ENCODE measurements at regions of chr7 and their contacts with region 1.

Region 1: DNA sequence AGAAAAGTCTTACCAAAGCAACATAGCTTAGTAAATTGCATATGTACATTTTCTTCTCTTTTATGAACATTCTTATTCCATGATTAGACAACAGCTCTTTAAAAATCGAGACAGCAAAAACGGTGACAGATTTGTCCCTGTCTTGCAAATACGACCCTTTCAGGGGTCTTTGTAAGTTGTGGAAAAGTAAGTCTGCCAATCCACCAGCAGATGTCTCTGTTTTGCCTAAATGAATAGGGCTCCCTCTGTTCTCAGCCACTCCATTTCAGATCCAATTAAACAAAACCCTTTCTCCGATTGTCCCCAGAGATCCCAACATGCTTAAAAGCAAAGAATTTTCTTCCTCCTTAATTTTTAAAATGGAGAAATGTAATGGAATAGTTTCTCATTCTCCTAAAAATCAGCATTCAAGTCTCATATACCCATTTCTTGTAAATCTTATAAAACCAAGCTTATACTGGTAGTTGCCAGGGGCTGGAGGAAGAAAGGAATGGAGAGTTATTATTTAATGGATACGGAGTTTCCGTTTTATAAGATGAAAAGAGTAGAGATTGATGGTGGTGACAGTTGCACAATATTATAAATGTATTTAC is 61.0 kb upstream of the NFE2L3 start:
- DNase-seq: peak in 7 of 9 donors; percentile 19 to 63 (median 53)
- ATAC-seq: peak; percentile 64
- H3K4me3 ChIP-seq: no peak overlapping the region
- H3K4me3 Mint-ChIP-seq: peak overlapping the region in 9 of 10 donors; percentile 4 to 50 (median 30)
- H3K27ac ChIP-seq: no peak overlapping the region
- H3K27ac Mint-ChIP-seq: peak overlapping the region in 6 of 9 donors; percentile 1 to 68 (median 2)
- H3K4me1 ChIP-seq: peaks cover 0 to 20% of the 10 kb centered on the region in 2 donors
- H3K4me1 Mint-ChIP-seq: peaks cover 11 to 54% (median 22%) of the 10 kb centered on the region in 7 donors
- H3K27me3 ChIP-seq: no peaks in the 10 kb centered on the region
- H3K27me3 Mint-ChIP-seq: no peaks in the 10 kb centered on the region

Region 2: DNA sequence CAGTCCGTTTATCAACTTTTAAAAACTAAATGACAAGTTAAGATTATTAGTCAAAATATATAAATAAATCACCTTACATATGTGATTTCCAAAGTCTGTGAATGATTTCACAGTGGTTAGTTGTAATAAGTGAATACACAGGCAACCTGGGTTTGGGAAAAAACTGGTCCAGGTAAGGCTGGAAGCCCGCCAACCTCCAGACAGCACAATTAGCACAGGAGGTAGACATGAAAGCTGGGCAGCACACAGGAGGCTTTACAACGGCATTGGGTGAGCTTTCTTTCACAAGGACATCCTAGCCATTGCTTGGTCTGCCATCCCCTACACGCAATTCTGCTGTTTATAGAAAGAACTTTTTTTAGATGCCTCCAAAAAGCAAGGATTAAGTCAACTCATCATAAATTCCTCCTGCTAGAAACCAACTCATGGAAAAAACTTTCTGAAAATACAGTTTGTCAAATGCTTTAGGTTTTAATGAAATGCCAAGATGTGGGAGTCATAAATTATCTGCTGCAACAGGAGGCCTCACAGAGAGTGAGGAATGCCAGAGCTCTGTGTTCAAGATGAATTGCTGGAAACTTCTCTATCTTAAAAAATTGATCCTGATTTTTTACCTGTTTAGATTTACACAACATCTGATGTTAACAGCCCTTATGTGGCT is 285.9 kb before region 1 on chr7:
- CTCF ChIA-PET with region 1: no interaction called
- POLR2A ChIA-PET with region 1: no interaction called
- intact Hi-C with region 1: no loop called
- DNase-seq: no peak
- ATAC-seq: no peak
- H3K4me3 ChIP-seq: no peak overlapping the region
- H3K4me3 Mint-ChIP-seq: no peak overlapping the region
- H3K27ac ChIP-seq: no peak overlapping the region
- H3K27ac Mint-ChIP-seq: no peak overlapping the region
- H3K4me1 ChIP-seq: no peaks in the 10 kb centered on the region
- H3K4me1 Mint-ChIP-seq: peaks cover 0 to 5% (median 0%) of the 10 kb centered on the region in 7 donors
- H3K27me3 ChIP-seq: no peaks in the 10 kb centered on the region
- H3K27me3 Mint-ChIP-seq: peaks cover 5 to 12% (median 9%) of the 10 kb centered on the region in 5 donors

Region 3: GRCh38 chr7:26078437-26079336 is 12.3 kb before region 1 on chr7:
- CTCF ChIA-PET with region 1: interaction called, 27 read pairs
- POLR2A ChIA-PET with region 1: interaction called, 4 read pairs
- intact Hi-C with region 1: loop called in 1 of 2 experiments (anchors 2 kb)
- DNase-seq: peak; percentile 68 to 86 (median 80)
- ATAC-seq: peak; percentile 99
- H3K4me3 ChIP-seq: no peak overlapping the region
- H3K4me3 Mint-ChIP-seq: peak overlapping the region in 7 of 10 donors; percentile 30 to 68 (median 51)
- H3K27ac ChIP-seq: no peak overlapping the region
- H3K27ac Mint-ChIP-seq: no peak overlapping the region
- H3K4me1 ChIP-seq: peaks cover 0 to 10% of the 10 kb centered on the region in 2 donors
- H3K4me1 Mint-ChIP-seq: peaks cover 0 to 10% (median 6%) of the 10 kb centered on the region in 7 donors
- H3K27me3 ChIP-seq: peaks cover 0 to 6% of the 10 kb centered on the region in 2 donors
- H3K27me3 Mint-ChIP-seq: peaks cover 15 to 84% (median 33%) of the 10 kb centered on the region in 5 donors

Region 4: DNA sequence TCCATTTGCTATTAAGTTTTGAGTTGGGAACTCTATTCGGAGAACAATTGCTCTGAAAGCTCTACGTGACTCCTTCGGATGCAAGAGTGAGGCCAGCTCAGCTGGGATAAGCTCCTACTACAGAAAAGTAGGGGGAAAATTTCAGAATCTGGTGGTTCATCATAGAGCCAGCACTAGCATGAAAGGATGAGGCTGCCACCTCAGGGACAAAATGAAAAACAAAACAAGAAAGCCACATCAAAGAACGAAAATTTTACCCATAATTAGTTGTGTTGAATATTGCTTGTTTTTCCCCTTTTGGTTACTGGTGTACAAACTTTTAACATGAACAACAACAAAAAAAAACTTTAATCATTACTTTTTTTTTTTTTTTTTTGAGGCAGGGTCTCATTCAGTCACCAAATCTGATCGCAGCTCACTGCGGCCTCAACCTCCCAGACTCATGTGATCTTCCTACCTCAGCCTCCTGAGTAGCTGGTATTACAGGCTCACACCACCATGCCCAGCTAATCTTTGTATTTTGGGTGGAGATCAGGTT is 21.2 kb after region 1 on chr7:
- CTCF ChIA-PET with region 1: interaction called, 58 read pairs
- POLR2A ChIA-PET with region 1: interaction called, 8 read pairs
- intact Hi-C with region 1: loop called in 1 of 2 experiments (anchors 1 kb)
- DNase-seq: peak in 4 of 9 donors; percentile 19 to 39 (median 28)
- ATAC-seq: no peak
- H3K4me3 ChIP-seq: no peak overlapping the region
- H3K4me3 Mint-ChIP-seq: peak overlapping the region in 1 of 10 donors; percentile 14
- H3K27ac ChIP-seq: no peak overlapping the region
- H3K27ac Mint-ChIP-seq: no peak overlapping the region
- H3K4me1 ChIP-seq: no peaks in the 10 kb centered on the region
- H3K4me1 Mint-ChIP-seq: peaks cover 2 to 19% (median 13%) of the 10 kb centered on the region in 7 donors
- H3K27me3 ChIP-seq: no peaks in the 10 kb centered on the region
- H3K27me3 Mint-ChIP-seq: peaks cover 0 to 9% (median 4%) of the 10 kb centered on the region in 5 donors

Region 5: DNA sequence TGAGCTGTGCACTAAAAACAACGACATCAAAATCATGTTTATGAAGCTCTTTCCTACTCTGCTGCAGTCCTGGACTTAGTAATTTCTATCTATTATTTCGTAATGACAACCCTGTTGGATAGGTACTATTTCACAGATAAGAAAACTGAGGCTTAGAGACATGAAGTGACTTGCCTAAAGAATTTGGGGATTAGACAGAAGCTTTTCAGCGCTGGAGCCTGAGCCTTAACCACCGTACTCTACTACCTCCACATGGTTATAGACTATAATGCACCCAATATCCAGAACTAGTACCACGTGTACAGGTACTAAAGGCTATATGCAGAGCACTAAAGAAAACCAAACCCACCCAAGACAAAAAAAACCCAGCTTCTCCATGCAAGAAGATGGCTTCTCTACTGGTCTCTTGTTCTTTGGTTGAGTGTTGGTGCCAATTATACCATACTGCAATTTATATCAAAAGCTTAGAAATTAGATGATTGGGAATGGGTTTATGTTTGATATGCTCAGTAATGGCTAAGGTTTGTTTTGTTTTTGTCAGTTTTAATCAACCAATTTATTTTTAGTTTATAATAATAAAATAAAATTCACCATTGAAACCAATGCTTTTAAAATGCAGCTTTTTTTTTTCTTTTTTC is 194.1 kb after region 1 on chr7:
- CTCF ChIA-PET with region 1: interaction called, 15 read pairs
- POLR2A ChIA-PET with region 1: no interaction called
- intact Hi-C with region 1: loop called (anchors 1 to 2 kb)
- DNase-seq: peak in 6 of 9 donors; percentile 20 to 49 (median 30)
- ATAC-seq: peak; percentile 82
- H3K4me3 ChIP-seq: no peak overlapping the region
- H3K4me3 Mint-ChIP-seq: no peak overlapping the region
- H3K27ac ChIP-seq: no peak overlapping the region
- H3K27ac Mint-ChIP-seq: no peak overlapping the region
- H3K4me1 ChIP-seq: no peaks in the 10 kb centered on the region
- H3K4me1 Mint-ChIP-seq: peaks cover 0 to 6% (median 4%) of the 10 kb centered on the region in 7 donors
- H3K27me3 ChIP-seq: no peaks in the 10 kb centered on the region
- H3K27me3 Mint-ChIP-seq: peaks cover 0 to 19% (median 0%) of the 10 kb centered on the region in 5 donors

Region 6: GRCh38 chr7:26291699-26292538 is 200.9 kb after region 1 on chr7 and contains the start of gene SNX10:
- CTCF ChIA-PET with region 1: interaction called, 4 read pairs
- POLR2A ChIA-PET with region 1: interaction called, 4 read pairs
- intact Hi-C with region 1: loop called in 1 of 2 experiments (anchors 2 kb)
- DNase-seq: peak; percentile 52 to 74 (median 72)
- ATAC-seq: peak; percentile 90
- H3K4me3 ChIP-seq: peak within 1 kb of the TSS; percentile 88
- H3K4me3 Mint-ChIP-seq: peak within 1 kb of the TSS; percentile 78 to 94 (median 91)
- H3K27ac ChIP-seq: peak within 1 kb of the TSS; percentile 58
- H3K27ac Mint-ChIP-seq: peak within 1 kb of the TSS; percentile 45 to 91 (median 82)
- H3K4me1 ChIP-seq: peaks cover 25 to 30% of the 10 kb centered on the region in 2 donors
- H3K4me1 Mint-ChIP-seq: peaks cover 22 to 41% (median 35%) of the 10 kb centered on the region in 7 donors
- H3K27me3 ChIP-seq: no peaks in the 10 kb centered on the region
- H3K27me3 Mint-ChIP-seq: peaks cover 0 to 13% (median 0%) of the 10 kb centered on the region in 5 donors
- total RNA-seq, gene SNX10: 5.0 to 37.0 (median 6.3) TPM

Region 7: GRCh38 chr7:26318921-26319320 is 227.9 kb after region 1 on chr7:
- CTCF ChIA-PET with region 1: interaction called, 4 read pairs
- POLR2A ChIA-PET with region 1: no interaction called
- intact Hi-C with region 1: loop called in 1 of 2 experiments (anchors 1 kb)
- DNase-seq: no peak
- ATAC-seq: no peak
- H3K4me3 ChIP-seq: no peak overlapping the region
- H3K4me3 Mint-ChIP-seq: no peak overlapping the region
- H3K27ac ChIP-seq: no peak overlapping the region
- H3K27ac Mint-ChIP-seq: peak overlapping the region in 3 of 9 donors; percentile 7 to 38 (median 8)
- H3K4me1 ChIP-seq: no peaks in the 10 kb centered on the region
- H3K4me1 Mint-ChIP-seq: peaks cover 0 to 10% (median 7%) of the 10 kb centered on the region in 7 donors
- H3K27me3 ChIP-seq: no peaks in the 10 kb centered on the region
- H3K27me3 Mint-ChIP-seq: no peaks in the 10 kb centered on the region

Region 8: DNA sequence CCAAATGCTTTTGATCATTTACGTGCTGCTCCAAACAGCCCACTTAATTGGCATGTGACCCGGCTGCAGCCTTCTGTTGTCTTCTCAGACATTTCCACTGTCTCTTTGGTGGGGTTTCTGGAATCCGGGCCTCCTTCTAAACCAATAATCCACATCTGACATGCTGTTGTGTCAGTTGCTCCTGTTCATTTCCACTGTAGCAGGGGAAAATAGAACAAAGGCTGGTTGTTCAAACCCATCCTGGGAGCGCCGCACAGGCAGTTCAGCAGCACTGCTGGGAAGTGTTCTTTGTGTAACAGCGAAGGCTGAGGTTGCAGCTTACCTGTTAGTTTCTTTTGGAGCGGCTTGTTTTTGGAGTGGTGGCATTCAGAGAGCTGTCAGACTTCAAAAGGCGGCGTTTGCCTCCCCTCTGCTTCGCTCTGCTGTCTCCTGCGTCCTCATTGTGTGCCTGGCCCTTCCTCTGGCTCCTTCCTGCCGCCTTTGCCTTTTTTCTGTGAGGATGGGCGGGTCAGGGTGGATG is 350.0 kb after region 1 on chr7:
- CTCF ChIA-PET with region 1: no interaction called
- POLR2A ChIA-PET with region 1: no interaction called
- intact Hi-C with region 1: no loop called
- DNase-seq: no peak
- ATAC-seq: no peak
- H3K4me3 ChIP-seq: no peak overlapping the region
- H3K4me3 Mint-ChIP-seq: no peak overlapping the region
- H3K27ac ChIP-seq: no peak overlapping the region
- H3K27ac Mint-ChIP-seq: no peak overlapping the region
- H3K4me1 ChIP-seq: no peaks in the 10 kb centered on the region
- H3K4me1 Mint-ChIP-seq: no peaks in the 10 kb centered on the region
- H3K27me3 ChIP-seq: no peaks in the 10 kb centered on the region
- H3K27me3 Mint-ChIP-seq: peaks cover 12 to 16% (median 14%) of the 10 kb centered on the region in 5 donors